PC-9 (cell line): ENCODE measurements at regions of chr6 and their contacts with region 1.

Region 1: DNA sequence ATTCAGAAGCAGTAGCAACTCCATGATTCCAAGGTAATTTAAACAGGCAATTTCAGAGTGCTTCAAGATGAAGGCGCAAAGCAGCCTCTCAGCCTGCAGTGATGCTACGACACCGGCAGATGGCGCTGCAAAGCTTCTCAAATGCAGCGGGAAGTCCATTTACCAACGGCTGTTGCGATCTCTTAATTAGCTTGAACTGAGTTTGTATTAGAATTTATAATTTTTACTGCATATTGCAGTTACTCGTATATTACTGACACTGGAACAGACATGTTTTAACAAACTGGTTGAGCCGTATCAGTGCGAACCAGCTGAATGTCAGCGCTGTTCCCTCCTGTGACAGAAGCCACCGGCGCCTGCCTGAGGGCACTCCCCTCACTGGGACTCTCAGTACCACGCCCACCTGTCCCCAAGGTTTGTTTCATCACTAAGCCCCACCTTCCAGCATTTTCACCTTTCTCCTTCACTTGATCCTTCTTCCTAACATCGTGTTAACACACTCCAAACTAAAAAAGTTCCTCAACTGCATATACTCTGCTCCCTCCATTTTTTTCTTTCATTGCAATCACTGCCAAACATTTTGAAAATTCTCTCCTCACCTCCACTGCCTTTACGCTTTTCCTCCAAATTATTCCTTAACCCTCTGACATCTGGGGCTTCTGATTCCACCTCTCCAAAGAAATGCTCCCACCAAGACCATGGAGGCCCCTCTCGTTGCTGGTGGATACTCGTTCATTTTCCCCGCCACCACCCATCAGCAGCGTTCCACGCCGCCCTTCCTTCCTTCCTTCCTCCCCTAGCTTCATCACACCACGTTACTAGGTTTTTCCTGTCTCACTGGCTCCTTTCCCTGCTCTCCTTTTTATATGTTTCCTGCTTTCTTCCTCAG is 14.5 kb downstream of the GNL1 start:
- DNase-seq: peak; percentile 73 to 79
- H3K4me3 ChIP-seq: peak overlapping the region; percentile 49
- H3K27ac ChIP-seq: no peak overlapping the region
- H3K4me1 ChIP-seq: peaks cover 6% of the 10 kb centered on the region; the same call in 1 of the 2 replicates
- H3K27me3 ChIP-seq: no peaks in the 10 kb centered on the region
- CTCF ChIP-seq: peak; percentile 98

Region 2: DNA sequence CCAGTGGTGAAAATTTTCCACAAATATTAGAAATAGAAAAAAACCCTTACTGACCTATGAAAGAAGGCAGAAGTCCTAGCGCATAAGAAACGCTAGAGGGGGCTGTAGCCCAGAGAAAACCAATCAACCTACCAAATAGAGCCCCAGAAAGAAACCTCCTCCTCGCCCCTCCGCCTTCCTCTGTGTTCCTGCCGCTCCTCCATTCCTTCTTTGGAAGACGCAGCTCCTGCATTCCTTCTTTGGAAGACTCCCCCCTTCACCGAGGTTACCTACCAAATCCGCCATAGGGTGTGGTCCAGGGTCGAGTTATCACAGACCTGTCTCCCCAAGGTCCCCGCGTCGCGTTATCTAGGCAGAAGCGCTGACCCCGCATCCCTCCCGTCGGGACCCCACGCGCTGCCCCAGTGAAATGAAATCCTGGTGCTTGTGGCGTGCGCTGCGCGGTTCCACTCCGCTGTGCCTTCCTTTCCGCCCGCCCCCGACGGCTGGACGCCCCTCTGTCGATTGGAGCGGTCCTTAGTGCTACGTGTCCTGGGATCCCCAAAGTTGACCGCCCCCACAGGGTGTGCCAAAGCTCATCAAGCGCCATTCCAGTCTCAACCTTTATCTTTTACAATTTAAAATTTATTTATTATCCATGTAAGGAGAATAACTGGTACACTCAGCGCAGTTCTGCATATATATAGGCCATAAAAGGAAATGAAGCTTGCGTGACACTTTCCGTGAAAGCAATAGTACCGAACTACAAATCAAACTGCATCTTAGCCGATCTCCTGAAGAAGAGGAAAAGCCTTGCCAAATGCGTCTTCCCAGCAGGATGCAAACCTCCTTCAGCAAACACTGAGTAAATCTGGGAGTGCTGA is 183.8 kb before region 1 on chr6:
- CTCF ChIA-PET with region 1: no interaction called
- POLR2A ChIA-PET with region 1: no interaction called
- intact Hi-C with region 1: loop called (anchors 5 kb)
- DNase-seq: peak in 1 of 2 experiments; percentile 31
- H3K4me3 ChIP-seq: no peak overlapping the region
- H3K27ac ChIP-seq: no peak overlapping the region
- H3K4me1 ChIP-seq: no peaks in the 10 kb centered on the region
- H3K27me3 ChIP-seq: peaks cover 47% of the 10 kb centered on the region
- CTCF ChIP-seq: peak; percentile 62

Region 3: DNA sequence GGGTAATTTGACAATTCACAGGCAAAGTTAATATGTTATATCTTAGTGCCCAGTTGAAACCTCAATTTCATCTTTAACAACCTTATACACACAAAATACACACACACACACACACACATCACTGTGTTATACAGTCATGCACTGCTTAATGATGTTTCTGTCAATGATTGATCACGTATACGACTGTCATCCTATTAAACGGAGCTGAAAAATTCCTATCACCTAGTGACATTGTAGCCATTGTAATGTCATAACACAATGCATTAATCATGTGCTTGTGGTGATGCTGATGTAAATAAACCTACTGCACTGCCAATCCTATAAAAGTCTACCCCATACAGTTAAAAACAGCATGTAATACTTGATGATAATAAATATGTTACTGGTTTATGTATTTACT is 117.2 kb before region 1 on chr6:
- CTCF ChIA-PET with region 1: no interaction called
- POLR2A ChIA-PET with region 1: no interaction called
- intact Hi-C with region 1: no loop called
- DNase-seq: no peak
- H3K4me3 ChIP-seq: no peak overlapping the region
- H3K27ac ChIP-seq: no peak overlapping the region
- H3K4me1 ChIP-seq: no peaks in the 10 kb centered on the region
- H3K27me3 ChIP-seq: peaks cover 79% of the 10 kb centered on the region
- CTCF ChIP-seq: no peak

Region 4: GRCh38 chr6:30483677-30484279 is 58.0 kb before region 1 on chr6:
- CTCF ChIA-PET with region 1: interaction called, 13 read pairs
- POLR2A ChIA-PET with region 1: no interaction called
- intact Hi-C with region 1: loop called (anchors 1 kb)
- DNase-seq: peak; percentile 45 to 56
- H3K4me3 ChIP-seq: no peak overlapping the region
- H3K27ac ChIP-seq: no peak overlapping the region
- H3K4me1 ChIP-seq: no peaks in the 10 kb centered on the region; the same call in 1 of the 2 replicates
- H3K27me3 ChIP-seq: peaks cover 30% of the 10 kb centered on the region
- CTCF ChIP-seq: peak; percentile 74

Region 5: GRCh38 chr6:30672445-30673253 is 130.9 kb after region 1 on chr6 and contains the start of gene DHX16:
- CTCF ChIA-PET with region 1: interaction called, 3 read pairs
- POLR2A ChIA-PET with region 1: no interaction called
- intact Hi-C with region 1: loop called (anchors 2 kb)
- DNase-seq: peak; percentile 88 to 96
- H3K4me3 ChIP-seq: peak within 1 kb of the TSS; percentile 89
- H3K27ac ChIP-seq: no peak within 1 kb of the TSS
- H3K4me1 ChIP-seq: peaks cover 17% of the 10 kb centered on the region
- H3K27me3 ChIP-seq: no peaks in the 10 kb centered on the region
- CTCF ChIP-seq: peak; percentile 84
- total RNA-seq, gene DHX16: 42.1 and 43.5 TPM in 2 replicates

Region 6: DNA sequence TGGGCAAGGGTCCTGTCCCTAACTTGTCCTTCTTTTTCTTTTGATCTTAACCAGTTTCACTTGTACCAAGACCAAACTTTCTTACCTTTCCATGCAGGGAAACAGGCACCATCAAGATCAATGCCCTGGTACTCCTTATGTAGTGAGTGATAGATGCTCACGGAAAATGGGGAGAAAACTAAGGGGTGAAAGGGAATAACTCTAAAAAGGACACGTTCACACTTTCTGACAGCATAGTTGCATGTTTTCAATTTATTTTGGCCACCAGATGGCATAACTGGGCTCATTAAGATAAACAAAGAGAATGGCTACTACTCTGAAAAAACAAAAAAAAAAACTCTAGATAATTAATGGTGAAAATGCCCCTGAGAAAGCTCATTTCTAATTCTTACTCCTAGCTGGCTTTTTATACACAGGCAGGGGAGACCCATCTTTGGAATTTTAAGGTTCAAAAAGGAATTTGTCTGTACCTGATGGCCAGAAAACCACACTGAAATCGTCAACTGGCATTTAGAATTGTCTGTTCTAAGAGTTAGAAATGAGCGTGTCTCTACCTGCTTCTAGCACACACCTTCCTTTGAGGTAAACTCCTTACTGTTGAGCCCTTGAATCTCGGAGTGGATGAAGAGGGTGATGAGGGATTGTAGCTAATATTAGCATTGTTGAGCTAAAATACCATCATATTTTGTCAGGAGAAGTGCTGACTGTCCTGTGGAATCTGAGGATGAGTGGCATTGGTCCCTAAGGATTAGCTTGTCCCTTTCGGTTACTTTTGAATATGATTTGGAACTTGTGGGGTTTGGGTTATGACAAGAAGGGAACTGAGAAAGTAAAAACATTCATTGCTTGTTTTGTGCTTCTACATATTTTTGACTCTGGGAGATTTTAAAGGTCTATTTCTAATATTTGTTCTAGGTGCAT is 280.4 kb after region 1 on chr6:
- CTCF ChIA-PET with region 1: no interaction called
- POLR2A ChIA-PET with region 1: no interaction called
- intact Hi-C with region 1: loop called (anchors 1 kb)
- DNase-seq: peak in 1 of 2 experiments; percentile 45
- H3K4me3 ChIP-seq: no peak overlapping the region
- H3K27ac ChIP-seq: peak overlapping the region; percentile 96
- H3K4me1 ChIP-seq: peaks cover 72% of the 10 kb centered on the region
- H3K27me3 ChIP-seq: no peaks in the 10 kb centered on the region
- CTCF ChIP-seq: peak; percentile 73

Region 7: GRCh38 chr6:31068669-31069340 is 527.0 kb after region 1 on chr6:
- CTCF ChIA-PET with region 1: interaction called, 3 read pairs
- POLR2A ChIA-PET with region 1: no interaction called
- intact Hi-C with region 1: loop called (anchors 5 kb)
- DNase-seq: peak; percentile 61 to 80
- H3K4me3 ChIP-seq: no peak overlapping the region
- H3K27ac ChIP-seq: no peak overlapping the region
- H3K4me1 ChIP-seq: peaks cover 3% of the 10 kb centered on the region; the same call in 1 of the 2 replicates
- H3K27me3 ChIP-seq: no peaks in the 10 kb centered on the region
- CTCF ChIP-seq: peak; percentile 94